Activated CD8-positive, alpha-beta memory T cell treated with anti-CD3 and anti-CD28 coated beads, Interleukin-2, amount 10 ng/mL, durations not matched to agents 7 days and 5 days (primary cell): ENCODE measurements at regions of chr6 and their contacts with region 1.

Region 1: DNA sequence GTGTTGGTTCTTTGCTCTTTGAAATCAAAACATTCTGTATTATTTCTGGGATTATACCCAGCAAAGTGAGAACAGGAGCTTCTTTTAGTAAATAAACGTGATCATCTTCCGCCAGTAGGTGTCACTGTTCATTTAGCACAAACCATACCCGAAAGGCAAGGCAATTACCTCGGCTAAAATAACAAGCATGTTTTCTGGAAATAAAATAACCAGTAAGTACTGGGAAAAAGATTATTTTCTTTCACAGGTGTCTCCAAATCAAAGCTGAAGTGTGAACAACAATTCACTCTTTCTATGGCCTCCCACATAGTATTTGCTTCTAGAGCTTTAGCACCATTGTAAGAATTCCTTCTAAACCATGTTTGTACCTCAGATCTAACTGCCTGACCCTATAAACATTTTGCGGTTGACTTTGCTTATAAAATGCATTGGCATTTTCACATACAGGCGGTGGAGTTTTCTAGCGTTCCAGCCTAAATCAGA is 144.6 kb upstream of the AGPAT4 start:
- DNase-seq: no peak
- ATAC-seq: peak; percentile 30
- H3K4me3 Mint-ChIP-seq: no peak overlapping the region
- H3K27ac Mint-ChIP-seq: no peak overlapping the region
- H3K4me1 Mint-ChIP-seq: no peaks in the 10 kb centered on the region
- H3K27me3 Mint-ChIP-seq: peaks cover 26% of the 10 kb centered on the region

Region 2: GRCh38 chr6:161439093-161439492 is 20.6 kb after region 1 on chr6:
- CTCF ChIA-PET with region 1: interaction called, 14 read pairs
- DNase-seq: no peak
- ATAC-seq: no peak
- H3K4me3 Mint-ChIP-seq: no peak overlapping the region
- H3K27ac Mint-ChIP-seq: no peak overlapping the region
- H3K4me1 Mint-ChIP-seq: peaks cover 8% of the 10 kb centered on the region
- H3K27me3 Mint-ChIP-seq: no peaks in the 10 kb centered on the region

Region 3: DNA sequence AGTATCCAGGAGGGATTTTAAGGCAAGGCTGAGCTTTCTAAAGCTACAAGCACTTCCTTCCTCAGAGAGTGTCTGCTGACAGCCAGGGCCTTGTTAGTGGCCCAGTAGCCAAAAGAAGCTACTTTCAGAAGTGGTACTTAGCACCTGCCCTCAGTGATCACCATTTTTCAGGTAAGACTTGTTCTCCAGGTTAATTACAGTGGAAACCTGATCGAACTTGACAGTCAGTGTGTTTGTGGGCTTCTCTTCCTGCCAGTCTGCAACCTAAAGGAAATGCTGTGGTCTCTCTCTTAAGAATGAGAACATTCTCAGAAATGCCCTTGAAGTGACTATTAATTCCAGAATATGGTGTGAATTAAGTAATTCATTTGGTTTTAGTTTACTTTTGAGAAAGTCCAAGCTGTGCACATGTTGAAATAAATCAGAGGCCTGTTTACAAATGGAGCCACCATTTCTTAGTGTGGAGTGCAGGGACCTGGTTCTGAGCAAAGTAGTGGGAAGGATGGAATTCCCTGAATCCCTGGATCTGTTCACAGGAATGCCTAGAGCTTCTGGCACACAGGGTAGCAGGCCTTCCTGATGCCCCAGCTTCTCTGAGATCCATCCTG is 40.6 kb after region 1 on chr6:
- CTCF ChIA-PET with region 1: interaction called, 11 read pairs
- DNase-seq: no peak
- ATAC-seq: peak; percentile 47
- H3K4me3 Mint-ChIP-seq: no peak overlapping the region
- H3K27ac Mint-ChIP-seq: no peak overlapping the region
- H3K4me1 Mint-ChIP-seq: peaks cover 26% of the 10 kb centered on the region
- H3K27me3 Mint-ChIP-seq: peaks cover 16% of the 10 kb centered on the region

Region 4: GRCh38 chr6:161694995-161695394 is 276.5 kb after region 1 on chr6:
- CTCF ChIA-PET with region 1: interaction called, 22 read pairs
- DNase-seq: no peak
- ATAC-seq: peak; percentile 23
- H3K4me3 Mint-ChIP-seq: no peak overlapping the region
- H3K27ac Mint-ChIP-seq: no peak overlapping the region
- H3K4me1 Mint-ChIP-seq: no peaks in the 10 kb centered on the region
- H3K27me3 Mint-ChIP-seq: peaks cover 2% of the 10 kb centered on the region